Left ventricle myocardium inferior (tissue), 1 donor: ENCODE measurements at regions of chr1 and their contacts with region 1.

Region 1: DNA sequence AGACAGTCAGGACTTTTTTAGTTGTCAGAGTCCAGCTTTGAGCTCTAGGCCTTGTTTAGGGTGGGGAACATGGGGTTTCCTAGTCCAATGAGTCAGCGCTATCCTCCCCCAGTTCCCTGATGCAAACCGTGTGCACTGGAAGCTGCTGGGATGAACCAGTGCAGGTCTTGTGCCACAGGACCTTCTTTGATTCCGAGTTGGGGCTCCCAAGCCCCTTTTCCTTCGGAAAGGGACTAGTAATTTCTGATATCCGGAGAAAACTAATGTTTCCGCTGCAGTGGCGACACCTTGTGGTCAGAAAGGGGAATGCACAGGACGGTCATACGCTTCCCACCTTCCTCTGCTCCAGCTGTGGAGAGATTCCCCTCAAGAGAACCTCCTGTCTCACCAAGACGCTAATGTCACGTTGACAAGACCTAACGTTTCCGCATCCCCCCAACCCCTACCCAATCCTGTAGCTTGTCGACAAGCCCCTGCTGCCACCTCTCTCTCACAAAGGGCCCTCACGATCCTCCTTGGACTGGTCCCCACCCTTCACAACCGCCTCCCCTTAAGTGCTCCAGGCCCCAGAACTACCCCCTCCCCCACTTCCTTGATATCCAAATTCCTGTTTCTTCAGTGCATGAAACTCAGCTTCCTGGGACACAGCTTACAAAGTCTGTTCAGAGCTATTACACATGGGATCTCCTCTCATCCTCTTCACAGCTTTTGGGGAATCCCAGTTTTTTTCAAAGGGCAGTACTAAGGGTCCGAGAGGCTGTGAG is 30.9 kb downstream of the GPA33 start:
- DNase-seq: peak; percentile 67
- H3K4me3 ChIP-seq: peak overlapping the region; percentile 29
- H3K27ac ChIP-seq: no peak overlapping the region
- H3K4me1 ChIP-seq: peaks cover 4% of the 10 kb centered on the region
- H3K27me3 ChIP-seq: peaks cover 16% of the 10 kb centered on the region
- CTCF ChIP-seq: peak; percentile 94

Region 2: GRCh38 chr1:166889776-166890175 is 169.5 kb before region 1 on chr1:
- intact Hi-C with region 1: loop called (anchors 5 kb)
- DNase-seq: no peak
- H3K4me3 ChIP-seq: no peak overlapping the region
- H3K27ac ChIP-seq: no peak overlapping the region
- H3K4me1 ChIP-seq: no peaks in the 10 kb centered on the region
- H3K27me3 ChIP-seq: peaks cover 48% of the 10 kb centered on the region
- CTCF ChIP-seq: no peak

Region 3: DNA sequence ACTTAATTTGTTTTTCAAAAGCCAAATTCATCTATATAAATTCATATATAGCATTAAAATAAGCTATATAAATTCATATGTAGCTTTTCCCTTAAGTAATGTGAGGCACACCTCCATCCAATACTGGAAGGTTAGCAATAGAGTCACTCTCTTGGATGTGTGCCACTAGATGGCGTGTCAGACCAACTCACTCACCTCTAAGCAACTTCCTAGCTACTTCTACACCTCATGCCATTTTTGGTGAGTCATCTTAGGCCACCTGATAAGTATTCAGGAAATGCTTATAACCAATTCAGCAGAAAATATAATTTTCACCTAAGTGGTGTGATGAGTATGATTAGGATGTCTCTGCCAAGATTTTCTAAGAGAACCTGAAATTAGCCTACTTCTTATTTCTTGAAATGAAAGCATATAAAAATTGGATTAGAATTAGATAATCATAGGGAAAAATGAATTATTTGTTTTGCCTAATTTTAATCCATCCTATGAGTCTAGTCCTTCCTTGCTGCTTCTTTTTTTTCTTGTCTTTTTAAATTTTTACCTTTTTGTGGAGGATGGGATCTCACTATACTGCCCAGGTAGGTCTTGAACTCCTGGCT is 148.7 kb before region 1 on chr1:
- intact Hi-C with region 1: loop called (anchors 5 kb)
- DNase-seq: peak; percentile 40
- H3K4me3 ChIP-seq: no peak overlapping the region
- H3K27ac ChIP-seq: no peak overlapping the region
- H3K4me1 ChIP-seq: no peaks in the 10 kb centered on the region
- H3K27me3 ChIP-seq: peaks cover 6% of the 10 kb centered on the region
- CTCF ChIP-seq: peak; percentile 77